Esophagus muscularis mucosa (tissue), 4 donors: ENCODE measurements at regions of chr6 and their contacts with region 1.

Region 1: DNA sequence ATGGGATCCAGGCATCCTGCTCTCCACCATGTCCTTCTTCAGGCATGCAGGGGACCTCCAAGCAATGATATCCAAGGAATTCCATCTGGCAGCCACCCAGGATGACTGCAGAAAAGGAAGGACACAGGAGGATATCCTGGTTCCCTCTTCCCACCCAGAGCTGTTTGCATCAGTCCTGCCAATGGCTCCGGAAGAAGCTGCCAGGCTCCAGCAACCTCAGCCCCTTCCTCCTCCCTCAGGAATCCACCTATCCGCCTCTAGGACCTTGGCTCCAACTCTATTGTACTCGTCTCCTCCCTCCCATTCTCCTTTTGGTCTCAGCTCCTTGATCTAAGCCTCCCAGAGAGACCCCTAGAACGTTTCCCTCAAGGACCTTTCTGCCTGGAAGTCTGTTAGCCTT is 733 bp upstream of the PSORS1C2 start:
- DNase-seq: no peak
- H3K4me3 ChIP-seq: no peak overlapping the region
- H3K27ac ChIP-seq: no peak overlapping the region
- H3K4me1 ChIP-seq: peaks cover 13 to 33% (median 32%) of the 10 kb centered on the region in 4 donors
- H3K27me3 ChIP-seq: peaks cover 0 to 7% (median 0%) of the 10 kb centered on the region in 4 donors
- CTCF ChIP-seq: no peak
- EP300 ChIP-seq: no peak
- POLR2A ChIP-seq: no peak

Region 2: GRCh38 chr6:31197559-31198305 is 58.1 kb after region 1 on chr6:
- intact Hi-C with region 1: loop called (anchors 2 kb)
- DNase-seq: peak; percentile 98
- H3K4me3 ChIP-seq: peak overlapping the region; percentile 66 to 85 (median 70)
- H3K27ac ChIP-seq: peak overlapping the region; percentile 92 to 97 (median 93)
- H3K4me1 ChIP-seq: peaks cover 18 to 48% (median 37%) of the 10 kb centered on the region in 4 donors
- H3K27me3 ChIP-seq: no peaks in the 10 kb centered on the region
- CTCF ChIP-seq: peak in 1 of 3 experiments; percentile 4
- EP300 ChIP-seq: no peak
- POLR2A ChIP-seq: peak; percentile 88